A673 (cell line): ENCODE measurements at regions of chr17 and their contacts with region 1.

Region 1: DNA sequence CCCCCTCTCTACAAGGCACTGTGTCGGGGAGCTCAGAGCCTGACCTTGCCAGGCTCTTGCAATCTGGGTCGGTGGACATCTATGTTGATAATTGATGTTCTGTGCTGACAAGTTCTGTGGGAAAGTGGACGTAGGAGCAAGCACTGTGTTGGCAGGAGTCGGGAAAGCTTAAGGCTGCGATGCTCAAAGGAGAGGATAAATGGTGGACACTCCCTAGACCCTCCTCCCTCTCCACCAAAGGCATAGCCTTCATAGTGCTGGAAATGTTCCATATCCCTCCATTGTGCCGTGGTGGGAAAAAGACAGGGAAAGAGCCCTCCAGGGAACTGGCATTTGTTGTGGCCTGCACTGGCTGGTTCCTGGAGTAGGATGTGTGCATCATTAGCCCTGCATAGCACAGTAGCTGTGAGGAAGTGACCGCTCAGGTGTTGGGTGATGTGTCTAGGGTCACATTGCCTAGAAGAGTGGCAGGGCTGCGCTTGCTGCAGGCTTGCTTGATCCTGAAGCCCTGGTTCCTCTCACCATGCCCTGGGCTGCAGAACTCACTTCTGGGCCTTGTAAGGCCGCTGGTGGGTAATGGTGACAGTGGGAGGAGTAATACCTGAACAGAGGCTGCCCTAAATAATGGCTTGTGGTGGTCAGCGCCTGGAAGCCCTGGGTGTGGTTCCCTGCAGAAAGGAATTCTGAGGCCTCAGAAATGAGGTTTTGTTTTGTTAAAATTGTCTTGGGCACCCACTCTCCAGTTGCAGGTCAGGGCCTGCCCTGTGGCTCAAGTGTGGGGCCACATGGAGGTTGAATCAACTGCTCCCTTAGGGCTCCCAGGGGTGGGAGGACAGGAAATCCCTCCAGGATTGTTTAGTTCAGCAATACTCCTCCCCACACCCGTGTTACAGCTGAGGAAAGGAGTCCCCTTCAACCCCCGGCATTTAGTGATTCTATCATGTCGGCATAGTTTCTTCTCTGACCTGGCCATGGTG is 62.6 kb downstream of the KSR1 start:
- DNase-seq: no peak
- H3K4me3 ChIP-seq: no peak overlapping the region
- H3K27ac ChIP-seq: no peak overlapping the region
- H3K4me1 ChIP-seq: no peaks in the 10 kb centered on the region
- H3K27me3 ChIP-seq: no peaks in the 10 kb centered on the region
- CTCF ChIP-seq: no peak

Region 2: DNA sequence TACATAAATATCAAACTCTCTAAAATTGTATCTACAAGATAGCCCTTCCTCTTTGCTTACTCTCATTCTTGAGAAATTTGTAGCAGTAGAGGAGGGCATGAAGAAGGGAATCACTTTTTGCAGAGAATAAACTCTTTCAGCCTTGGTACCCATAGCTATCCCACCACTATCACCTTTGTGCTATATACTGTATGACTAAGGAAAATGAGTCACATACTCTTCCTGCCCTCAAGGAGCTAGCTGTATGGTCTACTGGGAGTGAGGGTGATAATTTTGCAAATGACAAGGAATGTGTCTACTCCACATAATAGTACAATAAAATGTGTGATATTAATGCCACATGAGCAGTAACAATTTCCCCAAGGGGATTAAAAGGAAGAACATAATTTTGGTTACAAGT is 409.5 kb before region 1 on chr17:
- CTCF ChIA-PET with region 1: no interaction called
- POLR2A ChIA-PET with region 1: no interaction called
- intact Hi-C with region 1: no loop called
- DNase-seq: peak; percentile 10
- H3K4me3 ChIP-seq: no peak overlapping the region
- H3K27ac ChIP-seq: no peak overlapping the region
- H3K4me1 ChIP-seq: no peaks in the 10 kb centered on the region
- H3K27me3 ChIP-seq: no peaks in the 10 kb centered on the region
- CTCF ChIP-seq: no peak

Region 3: DNA sequence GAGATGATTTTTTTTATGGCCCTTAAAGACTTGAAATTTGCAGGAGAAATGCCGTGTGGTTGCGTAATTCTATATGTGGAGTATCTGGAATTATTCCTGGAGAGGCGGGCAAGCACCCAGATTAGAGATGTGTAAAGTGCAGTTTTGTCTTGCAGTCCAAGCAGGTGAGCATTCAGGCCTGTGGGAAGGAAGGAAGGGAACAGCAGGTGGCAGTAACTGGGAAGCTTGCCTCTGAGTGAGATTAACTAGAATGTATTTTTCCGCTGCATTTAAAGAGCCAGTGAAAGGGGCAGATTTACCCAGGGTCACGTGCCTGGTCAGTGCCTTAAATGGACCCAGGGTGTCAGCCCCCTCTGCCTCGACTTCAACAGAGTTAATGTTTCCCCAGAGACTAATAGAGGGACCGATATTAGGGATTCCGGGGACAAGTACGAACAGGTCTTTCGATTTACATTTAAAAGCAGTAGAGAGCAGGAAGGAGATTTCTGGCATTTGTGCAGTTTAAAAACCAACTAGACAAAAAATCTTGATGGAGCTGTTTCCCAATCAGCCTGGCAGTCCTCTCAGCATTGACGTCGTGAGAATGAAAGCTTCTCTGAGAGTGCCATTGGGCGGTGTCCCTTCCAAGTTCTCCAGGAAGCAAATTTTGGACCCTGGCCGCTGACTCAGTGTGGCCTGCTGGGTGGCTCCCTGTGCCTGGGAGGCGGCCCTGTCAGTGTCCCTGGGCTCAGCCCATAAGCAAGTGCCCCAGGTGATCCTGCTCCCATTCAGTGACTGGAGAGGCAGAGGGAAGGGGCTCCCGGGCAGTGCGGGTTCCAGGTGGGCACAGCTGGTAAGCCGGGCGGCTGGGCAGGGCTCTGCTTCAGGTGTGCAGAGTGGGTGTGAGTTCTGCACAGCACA is 24.4 kb before region 1 on chr17:
- CTCF ChIA-PET with region 1: no interaction called
- POLR2A ChIA-PET with region 1: no interaction called
- intact Hi-C with region 1: loop called (anchors 2 kb)
- DNase-seq: peak; percentile 46
- H3K4me3 ChIP-seq: no peak overlapping the region
- H3K27ac ChIP-seq: peak overlapping the region; percentile 60
- H3K4me1 ChIP-seq: peaks cover 55% of the 10 kb centered on the region
- H3K27me3 ChIP-seq: no peaks in the 10 kb centered on the region
- CTCF ChIP-seq: peak; percentile 40

Region 4: GRCh38 chr17:27906623-27907022 is 387.8 kb after region 1 on chr17:
- CTCF ChIA-PET with region 1: interaction called, 10 read pairs
- POLR2A ChIA-PET with region 1: no interaction called
- intact Hi-C with region 1: no loop called
- DNase-seq: no peak
- H3K4me3 ChIP-seq: no peak overlapping the region
- H3K27ac ChIP-seq: no peak overlapping the region
- H3K4me1 ChIP-seq: no peaks in the 10 kb centered on the region
- H3K27me3 ChIP-seq: no peaks in the 10 kb centered on the region
- CTCF ChIP-seq: no peak